Common myeloid progenitor, CD34-positive (primary cell): ENCODE measurements at regions of chr3 and their contacts with region 1.

Region 1: GRCh38 chr3:124650798-124651197 is 79.5 kb upstream of the UMPS start:
- DNase-seq: peak; percentile 30 to 69 (median 56)
- H3K4me3 ChIP-seq: peak overlapping the region in 2 of 7 experiments; percentile 0 to 6
- H3K27ac ChIP-seq: no peak overlapping the region
- H3K4me1 ChIP-seq: peaks cover 24 to 65% (median 50%) of the 10 kb centered on the region in 4 experiments
- H3K27me3 ChIP-seq: no peaks in the 10 kb centered on the region

Region 2: GRCh38 chr3:124117486-124117885 is 533.3 kb before region 1 on chr3:
- CTCF ChIA-PET with region 1: no interaction called
- POLR2A ChIA-PET with region 1: no interaction called
- DNase-seq: no peak
- H3K4me3 ChIP-seq: no peak overlapping the region
- H3K27ac ChIP-seq: no peak overlapping the region
- H3K4me1 ChIP-seq: no peaks in the 10 kb centered on the region
- H3K27me3 ChIP-seq: peaks cover 0 to 4% (median 0%) of the 10 kb centered on the region in 5 experiments

Region 3: GRCh38 chr3:124639406-124640237 is 11.2 kb before region 1 on chr3:
- CTCF ChIA-PET with region 1: interaction called, 18 read pairs
- POLR2A ChIA-PET with region 1: interaction called, 3 read pairs
- DNase-seq: peak; percentile 58 to 80 (median 76)
- H3K4me3 ChIP-seq: peak overlapping the region in 1 of 7 experiments; percentile 17
- H3K27ac ChIP-seq: no peak overlapping the region
- H3K4me1 ChIP-seq: peaks cover 9 to 72% (median 24%) of the 10 kb centered on the region in 4 experiments
- H3K27me3 ChIP-seq: no peaks in the 10 kb centered on the region